Prostate gland (tissue), 2 donors: ENCODE measurements at regions of chr17 and their contacts with region 1.

Region 1: DNA sequence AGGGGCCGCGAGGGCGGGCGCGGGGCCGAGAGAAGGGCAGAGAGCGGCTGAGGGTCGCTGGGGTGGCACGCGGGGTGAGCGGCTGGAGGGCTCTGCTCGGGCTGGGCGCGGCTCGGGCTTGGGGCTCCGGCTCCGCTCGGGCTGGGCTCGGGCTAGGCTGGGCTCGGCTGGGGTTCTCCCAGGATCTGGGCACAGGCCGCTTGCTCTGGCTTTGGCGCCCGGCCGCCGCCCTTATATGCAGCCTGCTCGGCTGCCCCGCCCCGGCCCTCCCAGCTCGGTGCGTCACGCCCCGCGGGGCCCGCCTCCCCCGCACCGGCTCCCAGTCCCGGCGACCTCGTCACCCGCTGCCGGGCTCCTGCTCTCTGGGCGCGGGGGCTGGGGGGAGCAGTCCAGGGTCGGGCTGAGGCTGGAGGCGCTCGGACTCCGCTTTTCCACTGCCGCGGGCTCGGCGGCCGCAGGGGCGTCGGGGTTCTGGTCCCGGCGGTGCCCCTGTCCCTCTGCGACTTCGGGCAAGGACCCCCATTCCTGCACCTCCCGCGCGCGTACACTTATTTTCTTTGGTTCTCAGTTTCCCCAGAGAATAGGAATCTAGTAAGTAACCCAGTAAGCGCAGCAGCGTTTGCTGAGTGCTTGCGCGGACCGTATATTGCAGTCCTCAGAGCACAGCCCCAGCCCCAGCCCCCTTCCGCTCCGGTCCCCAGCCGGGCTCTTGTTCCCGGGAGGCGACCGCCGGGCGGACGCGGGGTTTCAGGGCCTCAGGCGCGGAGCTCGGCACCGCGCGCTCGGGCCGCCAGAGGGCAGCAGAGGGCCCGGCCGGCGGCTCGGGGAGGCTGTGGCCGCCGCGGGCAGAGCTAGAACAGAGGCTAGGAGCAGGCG is at the start of gene RASD1:
- DNase-seq: peak; percentile 93
- H3K4me3 ChIP-seq: peak within 1 kb of the TSS; percentile 55 to 79
- H3K27ac ChIP-seq: peak within 1 kb of the TSS; percentile 92 to 95
- H3K4me1 ChIP-seq: peaks cover 19% of the 10 kb centered on the region
- H3K27me3 ChIP-seq: no peaks in the 10 kb centered on the region
- CTCF ChIP-seq: peak; percentile 93 to 98 (median 98)
- POLR2A ChIP-seq: peak; percentile 98
- total RNA-seq, gene RASD1: 124 to 175 TPM

Region 2: GRCh38 chr17:17356149-17356930 is 140.1 kb before region 1 on chr17:
- intact Hi-C with region 1: loop called (anchors 5 kb)
- DNase-seq: peak; percentile 76
- H3K4me3 ChIP-seq: no peak overlapping the region
- H3K27ac ChIP-seq: no peak overlapping the region
- H3K4me1 ChIP-seq: no peaks in the 10 kb centered on the region
- H3K27me3 ChIP-seq: no peaks in the 10 kb centered on the region
- CTCF ChIP-seq: peak; percentile 94 to 100 (median 98)
- POLR2A ChIP-seq: no peak

Region 3: GRCh38 chr17:17416007-17416399 is 80.4 kb before region 1 on chr17:
- intact Hi-C with region 1: no loop called
- DNase-seq: no peak
- H3K4me3 ChIP-seq: no peak overlapping the region
- H3K27ac ChIP-seq: peak overlapping the region; percentile 58 to 76
- H3K4me1 ChIP-seq: peaks cover 3% of the 10 kb centered on the region
- H3K27me3 ChIP-seq: no peaks in the 10 kb centered on the region
- CTCF ChIP-seq: no peak
- POLR2A ChIP-seq: no peak

Region 4: GRCh38 chr17:17568749-17569195 is 72.3 kb after region 1 on chr17:
- intact Hi-C with region 1: loop called (anchors 2 kb)
- DNase-seq: peak; percentile 76
- H3K4me3 ChIP-seq: no peak overlapping the region
- H3K27ac ChIP-seq: peak overlapping the region; percentile 68 to 82
- H3K4me1 ChIP-seq: peaks cover 24% of the 10 kb centered on the region
- H3K27me3 ChIP-seq: no peaks in the 10 kb centered on the region
- CTCF ChIP-seq: peak; percentile 69 to 91 (median 83)
- POLR2A ChIP-seq: no peak

Region 5: GRCh38 chr17:17613708-17614114 is 117.3 kb after region 1 on chr17:
- intact Hi-C with region 1: loop called (anchors 10 kb)
- DNase-seq: peak; percentile 39
- H3K4me3 ChIP-seq: no peak overlapping the region
- H3K27ac ChIP-seq: no peak overlapping the region
- H3K4me1 ChIP-seq: no peaks in the 10 kb centered on the region
- H3K27me3 ChIP-seq: no peaks in the 10 kb centered on the region
- CTCF ChIP-seq: peak; percentile 40 to 80 (median 66)
- POLR2A ChIP-seq: no peak

Region 6: GRCh38 chr17:17641621-17642409 is 145.4 kb after region 1 on chr17:
- intact Hi-C with region 1: loop called (anchors 5 kb)
- DNase-seq: peak; percentile 70
- H3K4me3 ChIP-seq: no peak overlapping the region
- H3K27ac ChIP-seq: no peak overlapping the region
- H3K4me1 ChIP-seq: no peaks in the 10 kb centered on the region
- H3K27me3 ChIP-seq: no peaks in the 10 kb centered on the region
- CTCF ChIP-seq: peak; percentile 83 to 95 (median 92)
- POLR2A ChIP-seq: no peak